B cell (primary cell): ENCODE measurements at regions of chr13 and their contacts with region 1.

Region 1: GRCh38 chr13:109786457-109787134 is at the start of gene IRS2:
- DNase-seq: peak; percentile 97
- ATAC-seq: peak; percentile 83
- H3K4me3 ChIP-seq: peak within 1 kb of the TSS; percentile 52 to 72 (median 70)
- H3K4me3 Mint-ChIP-seq: peak within 1 kb of the TSS; percentile 88
- H3K27ac ChIP-seq: peak within 1 kb of the TSS; percentile 44 to 72
- H3K27ac Mint-ChIP-seq: peak within 1 kb of the TSS; percentile 93
- H3K4me1 ChIP-seq: peaks cover 3 to 13% of the 10 kb centered on the region in 2 donors
- H3K4me1 Mint-ChIP-seq: peaks cover 8% of the 10 kb centered on the region
- H3K27me3 ChIP-seq: peaks cover 0 to 11% (median 0%) of the 10 kb centered on the region in 4 experiments
- H3K27me3 Mint-ChIP-seq: peaks cover 11% of the 10 kb centered on the region
- CTCF ChIP-seq: no peak
- total RNA-seq, gene IRS2: 26.9 and 27.7 TPM in 2 replicates

Region 2: DNA sequence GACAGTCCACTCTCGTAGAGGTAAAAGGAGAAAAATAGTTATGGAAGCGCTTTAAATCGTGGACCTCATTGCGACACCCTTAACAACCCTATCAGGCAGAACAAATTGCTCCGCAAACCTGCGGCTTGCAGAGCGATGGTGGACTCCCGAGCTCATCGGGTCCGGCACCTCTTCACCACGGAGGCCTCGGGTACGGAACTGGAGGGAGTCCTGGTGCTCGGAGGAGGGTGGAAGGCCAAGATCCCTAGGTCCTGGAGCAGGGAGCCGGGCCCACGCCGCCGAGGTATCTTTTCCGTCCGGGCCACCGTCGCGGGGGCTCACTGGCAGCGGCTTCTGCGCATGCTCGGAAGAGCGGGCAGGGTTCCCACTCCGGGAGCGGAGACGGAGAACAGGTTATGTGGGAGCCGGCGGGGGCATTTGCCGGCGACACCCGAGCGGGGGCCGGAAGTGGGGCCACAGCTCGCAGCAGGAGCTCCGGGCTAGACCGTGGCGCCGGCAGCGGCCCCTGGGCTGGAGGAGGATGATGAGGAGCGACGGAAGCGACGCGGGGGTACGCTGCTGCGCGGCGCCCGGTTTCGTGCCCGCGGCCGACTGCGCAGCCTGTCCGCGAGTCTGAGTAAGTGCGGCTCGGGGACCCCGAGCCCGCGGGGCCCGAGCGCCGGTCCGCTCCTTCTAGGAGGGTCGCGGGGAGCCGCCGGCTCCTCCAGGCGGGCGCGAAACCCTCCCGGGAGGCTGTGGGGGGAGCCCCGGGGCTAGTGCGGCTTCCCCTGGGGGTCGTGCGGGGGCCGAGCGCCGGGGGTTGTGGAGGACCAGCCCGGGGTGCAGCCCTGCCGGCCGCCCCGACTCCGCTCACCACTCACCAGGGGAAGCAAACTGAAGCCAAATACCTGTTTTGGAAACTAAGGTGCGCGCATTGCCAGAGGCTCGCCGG is 1568.3 kb before region 1 on chr13 and contains the start of gene ABHD13:
- CTCF ChIA-PET with region 1: no interaction called
- POLR2A ChIA-PET with region 1: no interaction called
- intact Hi-C with region 1: loop called (anchors 5 kb)
- DNase-seq: peak; percentile 96
- ATAC-seq: peak; percentile 65
- H3K4me3 ChIP-seq: peak within 1 kb of the TSS; percentile 80 to 90 (median 86)
- H3K4me3 Mint-ChIP-seq: peak within 1 kb of the TSS; percentile 96
- H3K27ac ChIP-seq: peak within 1 kb of the TSS; percentile 85 to 92
- H3K27ac Mint-ChIP-seq: peak within 1 kb of the TSS; percentile 98
- H3K4me1 ChIP-seq: peaks cover 46 to 52% of the 10 kb centered on the region in 2 donors
- H3K4me1 Mint-ChIP-seq: peaks cover 60% of the 10 kb centered on the region
- H3K27me3 ChIP-seq: no peaks in the 10 kb centered on the region
- H3K27me3 Mint-ChIP-seq: no peaks in the 10 kb centered on the region
- CTCF ChIP-seq: peak; percentile 27
- total RNA-seq, gene ABHD13: 14.3 and 14.6 TPM in 2 replicates

Region 3: DNA sequence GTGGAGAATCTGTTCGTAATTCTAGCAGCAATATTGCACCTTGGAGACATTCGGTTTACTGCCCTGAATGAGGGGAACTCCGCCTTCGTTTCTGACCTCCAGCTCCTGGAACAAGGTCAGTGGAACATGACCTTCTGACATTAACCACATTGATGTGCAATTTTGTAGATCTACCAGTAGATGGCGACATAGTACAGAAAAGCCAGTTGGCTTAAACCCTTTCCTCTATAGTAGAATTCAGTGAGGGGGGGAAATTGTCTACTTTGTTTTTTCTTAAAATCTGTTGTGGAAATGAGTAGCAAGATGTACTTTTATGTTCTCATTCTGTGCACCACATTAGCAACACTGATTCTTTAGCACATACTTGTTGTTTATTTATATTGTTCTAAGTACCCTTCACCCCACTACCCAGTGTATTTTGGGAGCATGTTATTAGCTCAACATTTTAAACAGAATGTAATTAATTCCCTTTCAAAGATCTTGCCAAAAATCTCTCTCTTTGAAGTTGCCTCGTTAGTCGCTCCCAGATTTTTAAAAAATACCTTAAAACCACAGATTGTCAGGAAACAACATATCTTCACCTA is 825.0 kb before region 1 on chr13:
- CTCF ChIA-PET with region 1: interaction called, 8 read pairs
- POLR2A ChIA-PET with region 1: no interaction called
- intact Hi-C with region 1: loop called (anchors 1 kb)
- DNase-seq: peak; percentile 61
- ATAC-seq: peak; percentile 61
- H3K4me3 ChIP-seq: no peak overlapping the region
- H3K4me3 Mint-ChIP-seq: no peak overlapping the region
- H3K27ac ChIP-seq: no peak overlapping the region
- H3K27ac Mint-ChIP-seq: no peak overlapping the region
- H3K4me1 ChIP-seq: no peaks in the 10 kb centered on the region
- H3K4me1 Mint-ChIP-seq: no peaks in the 10 kb centered on the region
- H3K27me3 ChIP-seq: no peaks in the 10 kb centered on the region
- H3K27me3 Mint-ChIP-seq: peaks cover 2% of the 10 kb centered on the region
- CTCF ChIP-seq: peak; percentile 96

Region 4: GRCh38 chr13:109162248-109163053 is 624.1 kb before region 1 on chr13:
- CTCF ChIA-PET with region 1: interaction called, 5 read pairs
- POLR2A ChIA-PET with region 1: interaction called, 3 read pairs
- intact Hi-C with region 1: loop called (anchors 5 kb)
- DNase-seq: peak; percentile 86
- ATAC-seq: peak; percentile 93
- H3K4me3 ChIP-seq: no peak overlapping the region
- H3K4me3 Mint-ChIP-seq: peak overlapping the region; percentile 82
- H3K27ac ChIP-seq: peak overlapping the region in 1 of 2 donors; percentile 50
- H3K27ac Mint-ChIP-seq: peak overlapping the region; percentile 85
- H3K4me1 ChIP-seq: peaks cover 18 to 33% of the 10 kb centered on the region in 2 donors
- H3K4me1 Mint-ChIP-seq: peaks cover 37% of the 10 kb centered on the region
- H3K27me3 ChIP-seq: peaks cover 0 to 4% (median 2%) of the 10 kb centered on the region in 4 experiments
- H3K27me3 Mint-ChIP-seq: peaks cover 26% of the 10 kb centered on the region
- CTCF ChIP-seq: no peak

Region 5: GRCh38 chr13:109747524-109747923 is 39.1 kb before region 1 on chr13:
- CTCF ChIA-PET with region 1: no interaction called
- POLR2A ChIA-PET with region 1: no interaction called
- intact Hi-C with region 1: no loop called
- DNase-seq: no peak
- ATAC-seq: no peak
- H3K4me3 ChIP-seq: no peak overlapping the region
- H3K4me3 Mint-ChIP-seq: no peak overlapping the region
- H3K27ac ChIP-seq: no peak overlapping the region
- H3K27ac Mint-ChIP-seq: no peak overlapping the region
- H3K4me1 ChIP-seq: no peaks in the 10 kb centered on the region
- H3K4me1 Mint-ChIP-seq: no peaks in the 10 kb centered on the region
- H3K27me3 ChIP-seq: peaks cover 0 to 2% (median 0%) of the 10 kb centered on the region in 4 experiments
- H3K27me3 Mint-ChIP-seq: peaks cover 7% of the 10 kb centered on the region
- CTCF ChIP-seq: no peak

Region 6: DNA sequence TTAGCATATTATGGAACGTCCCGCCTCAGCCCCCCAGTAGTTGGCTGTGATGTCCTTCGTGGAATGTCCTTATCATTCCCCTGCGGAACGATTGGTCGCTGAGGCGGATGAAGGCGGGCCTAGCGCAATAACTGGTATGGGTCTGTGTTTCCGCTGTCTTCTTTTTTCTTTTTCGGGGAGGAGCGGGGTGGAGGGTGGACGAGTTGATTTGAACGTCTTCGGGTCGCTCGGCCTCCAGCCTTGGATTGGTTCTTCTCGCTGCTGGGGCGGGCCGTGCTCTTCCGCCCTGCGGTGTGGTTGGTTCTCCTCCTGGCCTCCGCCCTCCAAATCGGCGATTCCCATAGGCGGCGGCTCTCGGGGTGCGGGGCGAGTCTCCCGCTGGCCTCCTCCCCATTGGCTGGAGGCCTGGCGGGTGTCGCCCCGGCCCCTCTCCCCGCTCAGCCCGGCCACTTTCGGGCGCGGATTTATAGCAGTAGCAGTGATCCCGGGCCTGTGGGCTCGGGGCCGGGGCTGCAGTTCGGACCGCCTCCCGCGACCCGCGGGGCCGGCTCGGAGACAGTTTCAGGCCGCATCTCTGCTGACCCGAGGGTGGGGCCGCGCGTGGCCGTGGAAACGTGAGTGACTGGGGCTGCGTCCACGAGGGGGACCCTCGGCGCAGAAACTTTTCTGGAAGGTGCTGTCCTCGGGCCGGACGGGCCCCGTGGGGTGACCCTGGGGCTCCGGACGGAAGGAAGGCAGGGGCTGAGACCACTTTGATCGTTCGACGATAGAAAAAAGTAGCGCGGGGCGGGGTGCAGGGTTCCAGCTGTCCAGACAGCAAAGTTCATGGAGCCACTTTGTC is 929.0 kb after region 1 on chr13:
- CTCF ChIA-PET with region 1: no interaction called
- POLR2A ChIA-PET with region 1: no interaction called
- intact Hi-C with region 1: loop called (anchors 10 kb)
- DNase-seq: peak; percentile 99
- ATAC-seq: peak; percentile 56
- H3K4me3 ChIP-seq: peak overlapping the region; percentile 89 to 100 (median 100)
- H3K4me3 Mint-ChIP-seq: peak overlapping the region; percentile 96
- H3K27ac ChIP-seq: peak overlapping the region; percentile 82 to 86
- H3K27ac Mint-ChIP-seq: peak overlapping the region; percentile 96
- H3K4me1 ChIP-seq: peaks cover 28 to 30% of the 10 kb centered on the region in 2 donors
- H3K4me1 Mint-ChIP-seq: peaks cover 35% of the 10 kb centered on the region
- H3K27me3 ChIP-seq: no peaks in the 10 kb centered on the region
- H3K27me3 Mint-ChIP-seq: no peaks in the 10 kb centered on the region
- CTCF ChIP-seq: peak; percentile 30